Colonic mucosa (tissue), 4 donors: ENCODE measurements at regions of chr1 and their contacts with region 1.

Region 1: DNA sequence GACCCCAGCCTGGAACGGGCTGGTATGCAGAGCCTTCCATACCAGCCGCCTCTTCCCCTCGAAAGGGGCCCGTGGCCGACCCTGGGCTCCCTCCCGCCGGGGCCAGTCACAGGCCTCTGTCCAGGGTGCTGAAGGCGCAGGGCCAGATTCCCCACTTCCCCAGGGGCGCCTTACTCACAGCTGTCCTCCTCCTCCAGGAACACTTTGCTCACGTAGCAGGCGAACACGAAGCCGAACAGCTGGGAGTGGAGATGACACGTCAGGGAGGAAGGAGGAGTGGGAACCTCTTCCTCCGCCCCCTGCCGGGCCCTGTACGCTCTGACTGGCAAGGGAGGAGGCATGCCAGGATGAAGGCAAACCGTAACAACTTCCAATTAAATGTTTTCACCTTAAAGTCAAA is 57.3 kb downstream of the NKAIN1 start:
- DNase-seq: peak; percentile 67
- H3K4me3 ChIP-seq: no peak overlapping the region
- H3K27ac ChIP-seq: no peak overlapping the region
- H3K4me1 ChIP-seq: no peaks in the 10 kb centered on the region
- H3K27me3 ChIP-seq: no peaks in the 10 kb centered on the region
- CTCF ChIP-seq: no peak

Region 2: GRCh38 chr1:31216016-31216415 is 33.7 kb after region 1 on chr1:
- intact Hi-C with region 1: no loop called
- DNase-seq: peak; percentile 54
- H3K4me3 ChIP-seq: no peak overlapping the region
- H3K27ac ChIP-seq: no peak overlapping the region
- H3K4me1 ChIP-seq: no peaks in the 10 kb centered on the region
- H3K27me3 ChIP-seq: no peaks in the 10 kb centered on the region
- CTCF ChIP-seq: no peak

Region 3: DNA sequence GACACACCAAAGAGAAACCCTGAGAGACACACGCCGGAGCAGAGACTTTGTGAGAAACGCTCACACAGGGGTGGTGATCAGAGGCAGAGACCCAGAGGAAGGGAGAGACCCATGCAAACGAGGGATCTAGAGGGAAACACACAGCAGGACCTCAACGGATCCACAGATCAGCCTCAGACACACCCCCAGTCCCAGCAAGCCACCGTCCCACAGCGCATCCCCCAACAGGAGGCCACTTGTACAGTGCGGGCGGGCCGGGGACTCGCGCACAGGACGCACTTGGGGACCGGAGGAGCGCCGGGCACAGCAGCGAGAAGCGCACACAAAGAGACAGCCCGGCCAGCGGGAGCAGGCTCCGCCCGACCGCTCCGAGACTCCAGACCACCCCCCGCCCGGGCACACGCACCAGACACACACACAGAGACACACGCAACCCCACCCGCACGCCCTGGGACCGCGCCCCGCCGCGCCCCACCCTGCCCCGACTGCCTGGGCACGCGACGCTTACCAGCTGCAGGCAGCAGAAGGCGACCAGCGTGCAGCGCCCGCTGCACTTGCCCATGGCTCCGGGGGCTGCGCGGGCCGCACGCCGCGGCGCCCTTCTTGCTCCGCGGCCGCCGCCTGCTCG is 56.7 kb after region 1 on chr1:
- intact Hi-C with region 1: no loop called
- DNase-seq: peak; percentile 27
- H3K4me3 ChIP-seq: no peak overlapping the region
- H3K27ac ChIP-seq: no peak overlapping the region
- H3K4me1 ChIP-seq: no peaks in the 10 kb centered on the region
- H3K27me3 ChIP-seq: peaks cover 26% of the 10 kb centered on the region
- CTCF ChIP-seq: no peak

Region 4: GRCh38 chr1:31335007-31335406 is 152.7 kb after region 1 on chr1:
- intact Hi-C with region 1: loop called (anchors 2 kb)
- DNase-seq: no peak
- H3K4me3 ChIP-seq: no peak overlapping the region
- H3K27ac ChIP-seq: no peak overlapping the region
- H3K4me1 ChIP-seq: no peaks in the 10 kb centered on the region
- H3K27me3 ChIP-seq: no peaks in the 10 kb centered on the region
- CTCF ChIP-seq: peak; percentile 39

Region 5: DNA sequence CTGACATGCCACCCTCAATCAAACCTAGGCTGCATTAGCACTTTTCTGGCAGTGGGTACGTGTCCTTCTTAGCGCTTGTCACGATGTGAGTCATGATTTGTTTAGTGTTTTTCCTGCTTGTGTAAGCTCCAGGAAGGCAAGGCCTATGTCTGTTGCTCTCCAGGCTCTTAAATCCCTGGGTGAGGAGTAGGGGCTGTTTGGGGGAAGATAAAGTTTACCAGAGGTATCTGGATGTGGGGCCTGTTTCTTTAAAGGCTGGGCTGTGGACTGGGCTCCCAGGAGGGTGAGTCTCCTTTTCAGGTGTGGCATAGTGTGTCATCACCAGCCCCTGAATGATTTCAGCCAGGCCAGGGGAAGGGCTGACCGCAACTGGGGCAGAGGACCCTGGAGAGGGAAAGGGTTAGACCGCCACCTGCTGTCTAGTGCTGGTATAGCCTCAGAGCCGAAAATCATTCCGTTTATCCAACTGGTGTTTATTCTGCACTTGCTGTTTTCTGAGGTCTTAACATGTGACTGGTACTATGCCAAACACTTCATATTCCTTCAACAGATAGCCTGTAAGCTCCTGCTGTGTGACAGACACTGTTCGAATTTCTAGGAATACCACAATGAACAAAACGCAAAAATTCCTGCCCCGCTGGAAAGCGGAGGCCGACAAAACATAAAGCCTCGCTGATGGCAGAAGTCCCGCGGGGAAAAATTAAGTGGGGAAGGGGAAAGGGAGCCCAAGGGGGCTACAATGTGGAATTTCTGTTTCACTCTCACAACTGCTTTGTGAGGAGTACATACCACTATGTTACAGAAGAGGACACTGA is 240.4 kb after region 1 on chr1:
- intact Hi-C with region 1: loop called (anchors 5 kb)
- DNase-seq: peak; percentile 84
- H3K4me3 ChIP-seq: no peak overlapping the region
- H3K27ac ChIP-seq: peak overlapping the region; percentile 55
- H3K4me1 ChIP-seq: no peaks in the 10 kb centered on the region
- H3K27me3 ChIP-seq: no peaks in the 10 kb centered on the region
- CTCF ChIP-seq: peak; percentile 89

Region 6: GRCh38 chr1:31548907-31549808 is 366.8 kb after region 1 on chr1:
- intact Hi-C with region 1: loop called (anchors 10 kb)
- DNase-seq: peak; percentile 97
- H3K4me3 ChIP-seq: peak overlapping the region; percentile 22
- H3K27ac ChIP-seq: peak overlapping the region; percentile 83
- H3K4me1 ChIP-seq: peaks cover 5% of the 10 kb centered on the region
- H3K27me3 ChIP-seq: no peaks in the 10 kb centered on the region
- CTCF ChIP-seq: peak; percentile 96